CD4-positive, alpha-beta T cell (primary cell): ENCODE measurements at regions of chr1 and their contacts with region 1.

Region 1: DNA sequence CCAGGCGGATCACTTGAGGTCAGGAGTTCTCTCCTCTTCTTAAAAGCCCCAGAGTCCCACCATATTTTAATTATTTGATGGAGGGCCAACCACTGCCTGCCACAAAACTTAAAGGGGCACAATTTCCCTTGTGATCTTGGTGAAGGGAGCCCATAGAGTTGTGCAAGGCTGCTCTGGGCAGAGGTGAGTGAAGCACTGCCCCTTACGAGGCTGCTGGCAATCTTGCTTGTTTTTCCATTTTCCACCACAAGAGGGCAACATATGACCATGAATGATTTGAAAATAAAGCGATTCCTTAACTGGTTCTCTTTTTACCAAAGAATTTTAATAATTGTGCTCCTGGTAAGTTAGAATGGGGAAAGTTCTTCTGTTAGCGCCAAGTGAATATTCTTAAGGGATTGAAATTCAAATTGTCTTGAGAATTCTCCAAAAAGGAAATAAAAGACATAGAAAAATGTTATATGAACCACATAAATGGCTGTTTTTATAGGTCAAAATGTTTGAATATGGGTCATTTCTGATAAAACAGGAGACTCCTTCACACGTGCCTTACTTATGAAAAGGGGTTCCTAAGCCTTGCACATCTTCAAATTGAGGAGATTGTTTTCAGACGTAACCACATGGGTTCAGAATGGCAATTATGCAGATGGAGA is 22.7 kb downstream of the PGM1 start:
- DNase-seq: peak; percentile 21 to 85 (median 46)
- ATAC-seq: peak; percentile 62
- H3K4me3 ChIP-seq: no peak overlapping the region
- H3K4me3 Mint-ChIP-seq: no peak overlapping the region
- H3K27ac ChIP-seq: no peak overlapping the region
- H3K27ac Mint-ChIP-seq: no peak overlapping the region
- H3K4me1 ChIP-seq: peaks cover 3% of the 10 kb centered on the region
- H3K4me1 Mint-ChIP-seq: no peaks in the 10 kb centered on the region
- H3K27me3 ChIP-seq: no peaks in the 10 kb centered on the region
- H3K27me3 Mint-ChIP-seq: no peaks in the 10 kb centered on the region
- CTCF ChIP-seq: peak; percentile 90

Region 2: DNA sequence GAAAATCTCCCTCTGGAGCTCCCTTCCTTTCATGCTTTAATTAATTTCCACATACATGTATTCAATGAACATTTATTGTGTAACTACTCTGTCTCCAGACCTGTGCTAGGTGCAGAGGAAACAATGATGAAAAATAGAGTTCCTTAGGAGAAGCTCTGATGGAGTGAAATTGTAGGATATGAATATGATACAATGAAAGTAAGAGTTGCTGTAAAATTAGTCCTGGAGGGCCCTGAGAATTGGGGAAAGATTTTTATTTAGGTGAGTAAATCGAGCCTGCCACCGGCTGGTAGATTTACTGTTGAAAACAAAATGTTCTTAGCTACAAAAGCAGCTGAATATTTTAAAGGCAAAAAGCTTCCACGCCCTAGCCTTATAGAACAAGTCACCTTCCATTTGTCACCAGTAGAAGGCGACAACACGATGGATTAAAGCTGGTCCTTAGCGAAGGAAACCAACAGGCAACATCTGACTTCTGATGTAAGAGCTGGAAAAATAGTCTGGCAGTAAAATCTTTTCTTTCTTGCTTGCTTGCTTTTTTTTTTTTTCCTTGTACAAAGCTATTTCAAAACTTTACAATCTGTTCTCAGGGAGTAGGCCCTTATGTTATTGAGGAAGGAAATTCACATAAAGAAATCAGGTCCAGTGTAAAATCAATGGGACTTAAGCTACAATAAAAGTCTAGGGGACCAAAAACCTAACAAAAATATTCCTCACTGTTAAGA is 76.0 kb after region 1 on chr1:
- CTCF ChIA-PET with region 1: no interaction called
- POLR2A ChIA-PET with region 1: no interaction called
- intact Hi-C with region 1: loop called in 1 of 2 experiments (anchors 5 kb)
- DNase-seq: peak in 5 of 14 experiments; percentile 9 to 57 (median 31)
- ATAC-seq: no peak
- H3K4me3 ChIP-seq: no peak overlapping the region
- H3K4me3 Mint-ChIP-seq: no peak overlapping the region
- H3K27ac ChIP-seq: no peak overlapping the region
- H3K27ac Mint-ChIP-seq: no peak overlapping the region
- H3K4me1 ChIP-seq: no peaks in the 10 kb centered on the region
- H3K4me1 Mint-ChIP-seq: peaks cover 8% of the 10 kb centered on the region
- H3K27me3 ChIP-seq: no peaks in the 10 kb centered on the region
- H3K27me3 Mint-ChIP-seq: peaks cover 10% of the 10 kb centered on the region
- CTCF ChIP-seq: peak; percentile 66

Region 3: DNA sequence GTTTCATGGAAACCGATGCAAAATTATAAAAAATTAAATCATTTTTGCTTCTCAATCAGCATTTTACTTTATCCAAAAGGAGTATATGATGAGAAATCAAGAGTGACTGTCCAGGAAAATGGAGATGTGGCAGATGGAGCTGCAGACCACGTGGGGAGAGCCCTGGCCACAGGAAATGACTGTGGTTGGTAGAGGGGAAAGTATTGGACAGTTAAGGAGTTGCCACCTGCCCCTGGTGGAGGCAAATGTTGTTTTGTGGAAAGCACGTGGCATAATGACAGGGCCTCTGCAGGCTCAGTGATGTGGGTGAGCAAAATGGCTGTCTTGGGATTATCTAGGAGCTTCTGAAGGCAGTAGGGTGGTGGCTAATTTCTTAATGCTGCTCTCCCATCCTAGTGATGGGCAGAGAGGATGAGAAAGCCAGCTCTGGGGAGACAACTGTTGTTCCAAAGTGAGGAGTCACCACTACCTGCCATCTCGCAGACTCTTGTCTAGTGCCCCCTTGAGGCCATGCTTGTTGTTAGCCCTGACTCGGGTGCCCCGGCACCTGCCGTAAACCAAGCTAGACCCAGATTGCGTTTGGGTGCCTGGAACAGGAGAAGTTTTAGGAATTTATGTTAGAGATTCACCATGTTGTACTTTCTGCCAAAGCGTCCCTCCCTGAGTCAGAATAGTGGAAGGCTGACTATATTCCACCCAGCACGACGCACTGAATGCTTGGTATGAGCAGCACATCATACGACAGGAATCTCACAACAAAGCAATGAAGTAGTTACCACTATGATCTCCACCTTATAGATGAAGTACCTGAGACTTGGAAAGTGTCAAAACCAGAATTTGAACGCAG is 301.9 kb after region 1 on chr1:
- CTCF ChIA-PET with region 1: no interaction called
- POLR2A ChIA-PET with region 1: no interaction called
- intact Hi-C with region 1: loop called in 1 of 2 experiments (anchors 5 kb)
- DNase-seq: peak in 1 of 14 experiments; percentile 13
- ATAC-seq: no peak
- H3K4me3 ChIP-seq: no peak overlapping the region
- H3K4me3 Mint-ChIP-seq: no peak overlapping the region
- H3K27ac ChIP-seq: no peak overlapping the region
- H3K27ac Mint-ChIP-seq: no peak overlapping the region
- H3K4me1 ChIP-seq: no peaks in the 10 kb centered on the region
- H3K4me1 Mint-ChIP-seq: no peaks in the 10 kb centered on the region
- H3K27me3 ChIP-seq: no peaks in the 10 kb centered on the region
- H3K27me3 Mint-ChIP-seq: peaks cover 7% of the 10 kb centered on the region
- CTCF ChIP-seq: no peak

Region 4: DNA sequence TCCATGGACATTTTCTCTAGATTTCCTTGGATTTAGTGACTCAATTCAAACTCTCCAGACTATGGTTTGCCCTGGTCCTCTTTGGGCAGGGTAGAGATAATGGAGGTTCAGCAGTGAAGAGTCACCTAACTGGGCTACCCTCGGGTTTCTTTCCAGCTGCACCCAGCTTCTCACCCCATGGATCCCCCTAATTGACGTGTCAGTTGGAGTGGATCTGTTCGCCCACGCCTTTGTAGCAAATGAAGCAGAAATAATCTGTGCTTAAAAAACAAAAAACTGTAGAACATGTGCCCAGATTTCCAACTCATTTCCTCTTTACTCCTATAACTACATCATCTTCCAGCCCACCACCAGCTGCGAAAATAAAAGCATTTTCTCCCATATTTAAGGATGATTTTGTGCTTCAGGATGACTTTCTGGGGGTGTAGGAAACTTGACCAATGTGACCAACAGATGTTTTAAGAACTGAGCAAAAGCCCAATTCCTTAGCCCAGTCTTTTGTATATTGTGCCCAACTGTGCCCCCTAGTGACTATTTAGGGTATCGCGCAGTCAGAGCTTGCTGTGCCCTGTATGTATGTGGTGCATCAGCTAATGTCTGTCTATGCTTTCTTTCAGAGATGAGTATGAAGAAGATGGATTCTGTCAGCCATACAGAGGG is 521.0 kb after region 1 on chr1:
- CTCF ChIA-PET with region 1: interaction called, 11 read pairs
- POLR2A ChIA-PET with region 1: no interaction called
- intact Hi-C with region 1: loop called (anchors 1 kb)
- DNase-seq: peak; percentile 45 to 77 (median 59)
- ATAC-seq: peak; percentile 64
- H3K4me3 ChIP-seq: no peak overlapping the region
- H3K4me3 Mint-ChIP-seq: no peak overlapping the region
- H3K27ac ChIP-seq: no peak overlapping the region
- H3K27ac Mint-ChIP-seq: no peak overlapping the region
- H3K4me1 ChIP-seq: no peaks in the 10 kb centered on the region
- H3K4me1 Mint-ChIP-seq: no peaks in the 10 kb centered on the region
- H3K27me3 ChIP-seq: no peaks in the 10 kb centered on the region
- H3K27me3 Mint-ChIP-seq: no peaks in the 10 kb centered on the region
- CTCF ChIP-seq: peak; percentile 73